CD4-positive, alpha-beta T cell (primary cell): ENCODE measurements at regions of chr11 and their contacts with region 1.

Region 1: GRCh38 chr11:5564259-5565019 is 16.1 kb upstream of the OR52H1 start:
- DNase-seq: no peak
- ATAC-seq: no peak
- H3K4me3 ChIP-seq: no peak overlapping the region
- H3K4me3 Mint-ChIP-seq: no peak overlapping the region
- H3K27ac ChIP-seq: no peak overlapping the region
- H3K27ac Mint-ChIP-seq: no peak overlapping the region
- H3K4me1 ChIP-seq: no peaks in the 10 kb centered on the region
- H3K4me1 Mint-ChIP-seq: peaks cover 6% of the 10 kb centered on the region
- H3K27me3 ChIP-seq: no peaks in the 10 kb centered on the region
- H3K27me3 Mint-ChIP-seq: no peaks in the 10 kb centered on the region
- CTCF ChIP-seq: no peak

Region 2: DNA sequence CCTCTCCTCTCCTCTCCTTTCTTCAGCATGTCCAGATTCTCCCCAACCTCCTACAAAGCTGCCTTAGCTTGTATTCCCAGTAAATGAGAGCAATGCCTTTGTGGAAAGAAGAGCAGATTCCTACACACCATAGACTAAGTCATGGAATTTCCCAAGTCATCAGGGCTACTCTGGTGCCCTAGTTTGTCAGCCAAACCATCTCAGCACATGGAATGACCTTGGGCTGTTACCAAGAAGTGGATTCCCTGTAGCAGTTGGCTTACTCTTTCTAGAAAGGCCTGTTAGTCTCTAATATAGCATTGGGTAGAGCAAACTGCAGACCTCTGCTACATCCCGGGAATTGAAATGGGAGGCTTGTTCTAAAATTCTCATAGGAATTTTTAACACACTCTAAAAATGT is 1811.9 kb after region 1 on chr11:
- CTCF ChIA-PET with region 1: no interaction called
- POLR2A ChIA-PET with region 1: no interaction called
- intact Hi-C with region 1: loop called in 1 of 2 experiments (anchors 10 kb)
- DNase-seq: no peak
- ATAC-seq: no peak
- H3K4me3 ChIP-seq: no peak overlapping the region
- H3K4me3 Mint-ChIP-seq: no peak overlapping the region
- H3K27ac ChIP-seq: no peak overlapping the region
- H3K27ac Mint-ChIP-seq: no peak overlapping the region
- H3K4me1 ChIP-seq: no peaks in the 10 kb centered on the region
- H3K4me1 Mint-ChIP-seq: no peaks in the 10 kb centered on the region
- H3K27me3 ChIP-seq: peaks cover 11 to 20% of the 10 kb centered on the region in 2 experiments
- H3K27me3 Mint-ChIP-seq: peaks cover 61% of the 10 kb centered on the region
- CTCF ChIP-seq: no peak